ENCODE measurements at regions of chr6 and their contacts with region 1.

Region 1: GRCh38 chr6:143575440-143575839 is 63.9 kb upstream of the FUCA2 start:
- DNase-seq: no peak
- ATAC-seq: peak; percentile 90

Region 2: DNA sequence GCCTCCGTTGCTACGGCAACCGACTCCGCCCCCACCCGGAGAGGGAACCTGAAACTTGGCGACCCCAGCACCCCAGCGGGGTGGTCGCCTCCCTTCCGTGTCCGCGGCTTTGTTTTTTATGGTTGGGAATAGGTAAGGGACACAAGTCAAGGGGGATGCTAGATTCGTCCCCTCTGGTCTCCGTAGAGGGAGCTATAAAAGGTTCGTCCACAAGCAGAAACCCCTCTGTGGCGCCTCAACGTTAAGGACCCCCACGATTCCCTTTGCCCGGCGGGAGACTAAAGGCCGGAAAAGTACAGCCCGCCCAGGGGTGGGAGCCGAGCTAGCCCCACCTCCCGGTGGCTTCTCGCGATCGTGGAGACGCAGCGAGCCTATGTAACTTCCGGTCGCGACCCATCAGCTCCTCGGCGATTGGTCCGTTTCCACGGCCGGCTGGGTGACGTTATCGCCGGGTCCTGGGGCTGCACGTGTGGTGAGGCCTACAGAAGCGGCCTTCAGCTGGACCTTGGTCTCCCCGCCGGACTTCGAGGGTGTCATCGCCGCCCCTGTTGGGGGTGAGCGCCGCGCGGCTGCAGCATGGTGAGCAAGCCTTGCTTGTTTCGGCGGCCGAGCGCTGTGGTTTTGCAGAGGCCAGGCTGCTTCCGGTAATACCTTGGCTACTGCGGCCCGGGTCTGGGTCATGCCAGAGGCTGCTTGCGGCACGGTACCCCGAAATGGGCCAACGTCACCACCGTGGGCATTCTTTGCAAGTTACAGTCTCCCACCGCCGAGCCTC is 267.6 kb after region 1 on chr6 and contains the start of gene LTV1:
- intact Hi-C with region 1: loop called (anchors 5 kb)
- DNase-seq: peak; percentile 98
- ATAC-seq: peak; percentile 100
- total RNA-seq, gene LTV1: 12.4 TPM

Region 3: GRCh38 chr6:144013486-144013909 is 438.1 kb after region 1 on chr6:
- intact Hi-C with region 1: loop called (anchors 1 kb)
- DNase-seq: peak; percentile 88
- ATAC-seq: peak; percentile 37

Region 4: DNA sequence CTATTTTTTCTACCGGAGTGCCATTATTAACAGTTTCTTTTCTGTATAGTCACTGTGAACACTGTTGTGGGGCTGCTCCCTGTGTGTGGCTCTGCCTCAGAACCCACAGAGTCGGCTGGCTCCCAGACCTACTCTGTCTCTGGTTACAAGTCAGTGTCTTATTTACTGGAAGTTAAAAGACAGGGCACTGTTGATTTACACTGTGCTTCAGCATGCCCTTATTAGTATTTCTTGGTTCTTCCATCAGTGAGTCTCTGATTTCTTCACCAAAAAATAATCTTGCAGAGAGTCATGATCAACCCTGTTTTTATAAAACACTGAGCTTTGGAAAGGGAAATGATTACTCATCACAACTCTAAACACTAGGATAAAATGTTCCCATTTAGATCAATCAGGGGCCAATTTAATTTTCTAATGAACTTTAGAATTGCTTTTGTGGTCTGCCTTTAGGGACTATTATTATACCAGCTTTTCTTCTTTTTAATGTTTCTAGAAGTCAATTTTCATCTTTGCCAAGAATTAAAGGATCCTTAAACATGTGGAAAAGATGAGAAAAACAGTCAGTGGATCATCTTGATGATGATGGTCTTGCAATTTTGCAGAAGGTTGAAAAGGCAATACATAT is 802.3 kb after region 1 on chr6:
- intact Hi-C with region 1: loop called (anchors 5 kb)
- DNase-seq: no peak
- ATAC-seq: no peak

Measured in Right ventricle myocardium inferior (tissue), 1 donor.